ENCODE measurements at regions of chr12 and their contacts with region 1.

Region 1: DNA sequence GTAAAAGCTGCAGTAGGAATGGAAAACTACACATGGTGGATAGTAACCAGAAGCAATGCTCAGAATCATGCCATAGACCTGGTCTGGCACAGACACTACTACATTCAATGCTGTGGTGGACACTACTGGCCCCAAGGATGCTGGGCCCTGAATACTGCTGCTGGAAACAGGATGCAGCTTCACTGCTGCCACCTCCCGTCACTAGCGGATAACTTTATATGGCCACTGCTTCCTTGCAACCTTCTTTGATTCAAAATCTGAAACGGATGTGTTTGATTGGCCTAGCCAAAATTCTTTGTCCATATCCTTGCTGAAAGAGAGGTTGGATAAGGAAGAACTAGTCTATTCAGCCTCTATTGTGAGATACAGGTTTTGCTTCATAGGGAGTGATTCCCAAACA is 30.7 kb downstream of the ADCY6 start:
- DNase-seq: no peak
- H3K4me3 ChIP-seq: no peak overlapping the region
- H3K27ac ChIP-seq: no peak overlapping the region
- H3K4me1 ChIP-seq: no peaks in the 10 kb centered on the region
- H3K27me3 ChIP-seq: no peaks in the 10 kb centered on the region
- CTCF ChIP-seq: no peak

Region 2: GRCh38 chr12:48618541-48618940 is 139.7 kb before region 1 on chr12:
- CTCF ChIA-PET with region 1: interaction called, 16 read pairs
- POLR2A ChIA-PET with region 1: no interaction called
- intact Hi-C with region 1: no loop called
- DNase-seq: peak; percentile 80
- H3K4me3 ChIP-seq: no peak overlapping the region
- H3K27ac ChIP-seq: no peak overlapping the region
- H3K4me1 ChIP-seq: no peaks in the 10 kb centered on the region
- H3K27me3 ChIP-seq: no peaks in the 10 kb centered on the region
- CTCF ChIP-seq: peak; percentile 98

Region 3: GRCh38 chr12:48795480-48796455 is 37.5 kb after region 1 on chr12:
- CTCF ChIA-PET with region 1: interaction called, 13 read pairs
- POLR2A ChIA-PET with region 1: no interaction called
- intact Hi-C with region 1: loop called (anchors 1 kb)
- DNase-seq: peak; percentile 84
- H3K4me3 ChIP-seq: no peak overlapping the region
- H3K27ac ChIP-seq: no peak overlapping the region
- H3K4me1 ChIP-seq: no peaks in the 10 kb centered on the region
- H3K27me3 ChIP-seq: no peaks in the 10 kb centered on the region
- CTCF ChIP-seq: peak; percentile 93

Region 4: DNA sequence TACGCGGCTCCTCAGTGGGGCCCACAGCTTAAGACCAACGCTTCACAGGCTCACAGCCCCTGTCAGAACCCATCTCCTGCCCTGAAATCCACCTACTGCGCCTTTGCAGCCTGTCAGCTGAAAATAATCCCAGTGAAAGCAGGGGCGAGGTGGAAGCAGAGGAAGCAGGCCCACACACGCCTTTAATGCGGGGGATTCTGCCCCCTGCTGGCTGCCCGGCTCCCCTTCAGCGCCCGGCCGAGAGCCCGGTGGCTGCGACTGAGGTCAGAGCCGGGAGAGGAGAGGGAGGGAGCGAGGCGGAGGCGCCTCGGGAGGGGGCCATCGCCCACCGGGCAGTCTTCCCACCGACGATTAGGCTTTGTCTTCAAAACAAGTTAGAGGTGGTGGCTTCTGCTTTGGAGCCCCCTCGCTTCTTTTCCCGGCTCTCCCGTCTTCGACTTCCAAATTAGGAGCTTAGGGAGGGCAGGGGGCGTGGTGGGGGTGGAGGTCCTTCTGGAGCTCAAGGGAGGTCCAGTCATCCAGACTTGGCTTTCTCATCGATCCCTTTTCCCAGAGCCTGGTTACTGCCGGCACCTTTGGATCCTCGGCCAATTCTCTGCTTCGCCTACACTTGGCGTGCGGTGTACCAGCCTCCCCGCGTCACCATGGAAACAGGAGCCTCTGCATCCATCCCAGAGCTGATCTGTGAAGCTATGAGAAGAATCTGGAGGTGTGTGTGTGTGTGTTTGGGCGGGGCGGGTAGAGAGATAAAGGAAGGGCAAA is 132.6 kb after region 1 on chr12:
- CTCF ChIA-PET with region 1: interaction called, 10 read pairs
- POLR2A ChIA-PET with region 1: no interaction called
- intact Hi-C with region 1: no loop called
- DNase-seq: peak; percentile 80
- H3K4me3 ChIP-seq: peak overlapping the region; percentile 27
- H3K27ac ChIP-seq: no peak overlapping the region
- H3K4me1 ChIP-seq: no peaks in the 10 kb centered on the region
- H3K27me3 ChIP-seq: peaks cover 13% of the 10 kb centered on the region
- CTCF ChIP-seq: peak; percentile 95

Region 5: GRCh38 chr12:48957141-48958048 is 199.2 kb after region 1 on chr12 and contains the start of gene ARF3:
- CTCF ChIA-PET with region 1: interaction called, 10 read pairs
- POLR2A ChIA-PET with region 1: no interaction called
- intact Hi-C with region 1: no loop called
- DNase-seq: peak; percentile 97
- H3K4me3 ChIP-seq: peak within 1 kb of the TSS; percentile 92
- H3K27ac ChIP-seq: peak within 1 kb of the TSS; percentile 86
- H3K4me1 ChIP-seq: peaks cover 16% of the 10 kb centered on the region
- H3K27me3 ChIP-seq: no peaks in the 10 kb centered on the region
- CTCF ChIP-seq: no peak
- total RNA-seq, gene ARF3: 183 and 196 TPM in 2 replicates

Measured in A673 (cell line).